ENCODE measurements at regions of chr15 and their contacts with region 1.

Region 1: GRCh38 chr15:50876989-50877360 is 31.5 kb upstream of the AP4E1 start:
- DNase-seq: peak; percentile 91 to 96
- ATAC-seq: peak; percentile 90 to 91
- H3K4me3 ChIP-seq: peak overlapping the region; percentile 50
- H3K27ac ChIP-seq: peak overlapping the region; percentile 76 to 86
- H3K4me1 ChIP-seq: peaks cover 26% of the 10 kb centered on the region
- CTCF ChIP-seq: peak; percentile 98
- EP300 ChIP-seq: no peak
- POLR2A ChIP-seq: no peak
- RAD21 ChIP-seq: peak; percentile 99

Region 2: DNA sequence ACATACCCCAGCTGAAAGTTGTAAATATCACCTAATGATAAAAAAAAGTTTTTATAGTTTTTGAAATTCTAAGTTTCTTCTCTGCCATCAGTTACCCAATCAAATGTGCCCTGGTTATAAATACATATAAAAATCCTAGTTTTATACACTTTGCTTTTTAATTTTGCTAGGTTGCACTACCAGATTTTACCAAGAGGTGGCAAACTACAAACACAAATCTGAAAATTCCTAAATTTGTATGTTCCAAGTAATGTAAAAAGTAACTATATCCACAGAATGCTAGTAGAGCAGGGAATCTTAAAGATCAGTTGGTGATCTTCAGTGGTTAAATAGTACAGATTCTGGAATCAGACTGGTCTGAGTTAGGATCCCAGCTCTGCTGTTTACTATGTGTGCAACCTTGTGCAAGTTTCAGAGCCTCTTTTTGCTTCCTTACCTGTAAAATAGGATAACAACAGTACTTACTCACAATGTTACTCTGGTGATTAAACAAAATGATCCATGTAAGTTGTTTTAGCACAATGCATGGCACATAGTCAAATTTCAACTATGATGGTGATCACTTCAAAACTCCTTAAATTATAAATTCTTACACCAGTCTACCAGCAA is 201.3 kb before region 1 on chr15:
- CTCF ChIA-PET with region 1: interaction called, 73 read pairs
- POLR2A ChIA-PET with region 1: interaction called, 6 read pairs
- DNase-seq: peak; percentile 25 to 52
- ATAC-seq: no peak; a peak in 1 of 6 replicates
- H3K4me3 ChIP-seq: no peak overlapping the region
- H3K27ac ChIP-seq: peak overlapping the region in 1 of 2 experiments; percentile 23; a peak in 1 of 6 replicates
- H3K4me1 ChIP-seq: peaks cover 24% of the 10 kb centered on the region
- CTCF ChIP-seq: peak; percentile 88
- EP300 ChIP-seq: no peak
- POLR2A ChIP-seq: no peak
- RAD21 ChIP-seq: peak; percentile 76 to 87

Region 3: DNA sequence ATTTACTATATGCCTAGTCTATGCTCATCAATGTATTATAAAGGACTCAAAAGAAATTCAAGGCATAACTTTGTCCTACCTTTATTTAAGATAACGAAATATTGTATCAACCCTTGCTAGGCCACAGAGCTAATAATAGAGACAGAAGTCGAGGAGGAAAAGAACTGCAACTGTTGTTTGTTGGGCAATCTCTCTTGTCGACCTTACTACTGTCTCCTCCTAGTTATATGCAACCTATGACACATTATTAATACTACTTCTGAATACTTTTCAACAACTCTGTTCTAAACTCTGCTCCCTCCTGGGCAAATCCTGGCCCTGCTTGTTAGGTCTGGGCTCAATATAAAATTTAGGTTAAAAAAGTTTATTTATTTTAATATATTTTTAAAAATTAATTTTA is 136.0 kb before region 1 on chr15:
- CTCF ChIA-PET with region 1: interaction called, 10 read pairs
- POLR2A ChIA-PET with region 1: no interaction called
- DNase-seq: no peak
- ATAC-seq: no peak
- H3K4me3 ChIP-seq: no peak overlapping the region
- H3K27ac ChIP-seq: no peak overlapping the region
- H3K4me1 ChIP-seq: peaks cover 3% of the 10 kb centered on the region; the same call in 1 of the 3 replicates
- CTCF ChIP-seq: no peak
- EP300 ChIP-seq: no peak
- POLR2A ChIP-seq: no peak
- RAD21 ChIP-seq: no peak

Region 4: GRCh38 chr15:50765195-50765973 is 111.6 kb before region 1 on chr15 and contains the start of gene SPPL2A:
- CTCF ChIA-PET with region 1: interaction called, 9 read pairs
- POLR2A ChIA-PET with region 1: interaction called, 13 read pairs
- DNase-seq: peak; percentile 93 to 95
- ATAC-seq: peak; percentile 97 to 98
- H3K4me3 ChIP-seq: peak within 1 kb of the TSS; percentile 59
- H3K27ac ChIP-seq: peak within 1 kb of the TSS; percentile 92 to 95
- H3K4me1 ChIP-seq: peaks cover 28% of the 10 kb centered on the region
- CTCF ChIP-seq: no peak
- EP300 ChIP-seq: no peak
- POLR2A ChIP-seq: peak; percentile 96
- RAD21 ChIP-seq: peak in 1 of 2 experiments; percentile 23; a peak in 2 of 5 replicates
- polyA plus RNA-seq, gene SPPL2A: 138 and 163 TPM in 2 replicates

Region 5: GRCh38 chr15:50828610-50829219 is 48.3 kb before region 1 on chr15:
- CTCF ChIA-PET with region 1: interaction called, 10 read pairs
- POLR2A ChIA-PET with region 1: no interaction called
- DNase-seq: peak; percentile 55 to 76
- ATAC-seq: peak; percentile 88 to 97
- H3K4me3 ChIP-seq: no peak overlapping the region
- H3K27ac ChIP-seq: no peak overlapping the region
- H3K4me1 ChIP-seq: peaks cover 9% of the 10 kb centered on the region; the same call in 2 of the 3 replicates
- CTCF ChIP-seq: no peak
- EP300 ChIP-seq: no peak
- POLR2A ChIP-seq: no peak
- RAD21 ChIP-seq: no peak

Region 6: DNA sequence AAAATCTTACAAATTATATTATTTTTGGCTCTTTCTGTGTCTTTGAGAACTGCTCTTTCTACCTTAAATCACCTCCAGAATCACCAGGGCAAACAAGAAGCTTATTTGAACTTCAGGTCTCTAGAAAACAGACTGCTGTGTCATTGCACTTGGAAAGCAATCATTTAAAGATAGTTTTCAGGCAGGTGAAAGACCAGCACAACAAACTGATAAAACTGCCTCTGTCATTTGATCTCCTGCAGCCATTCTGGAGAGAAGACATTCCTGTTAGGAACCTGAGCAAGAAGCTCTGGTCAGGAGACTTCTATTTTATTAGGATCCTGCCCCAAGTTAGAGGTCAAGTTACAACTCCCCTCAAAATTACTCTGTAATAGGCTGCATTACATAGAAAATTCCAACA is 19.2 kb before region 1 on chr15:
- CTCF ChIA-PET with region 1: interaction called, 42 read pairs
- POLR2A ChIA-PET with region 1: interaction called, 8 read pairs
- DNase-seq: no peak
- ATAC-seq: no peak
- H3K4me3 ChIP-seq: no peak overlapping the region
- H3K27ac ChIP-seq: peak overlapping the region; percentile 37 to 61
- H3K4me1 ChIP-seq: peaks cover 27% of the 10 kb centered on the region
- CTCF ChIP-seq: no peak
- EP300 ChIP-seq: no peak
- POLR2A ChIP-seq: no peak
- RAD21 ChIP-seq: no peak

Region 7: GRCh38 chr15:50865515-50866353 is 11.2 kb before region 1 on chr15:
- CTCF ChIA-PET with region 1: interaction called, 42 read pairs
- POLR2A ChIA-PET with region 1: no interaction called
- DNase-seq: no peak
- ATAC-seq: no peak
- H3K4me3 ChIP-seq: no peak overlapping the region
- H3K27ac ChIP-seq: no peak overlapping the region
- H3K4me1 ChIP-seq: no peaks in the 10 kb centered on the region
- CTCF ChIP-seq: no peak
- EP300 ChIP-seq: no peak
- POLR2A ChIP-seq: no peak
- RAD21 ChIP-seq: no peak

Measured in A549 (cell line).